Activated CD4-positive, alpha-beta T cell treated with anti-CD3 and anti-CD28 coated beads, Interleukin-2, amount 10 ng/mL, durations not matched to agents 24 days and 14 days (primary cell): ENCODE measurements at regions of chr3 and their contacts with region 1.

Region 1: DNA sequence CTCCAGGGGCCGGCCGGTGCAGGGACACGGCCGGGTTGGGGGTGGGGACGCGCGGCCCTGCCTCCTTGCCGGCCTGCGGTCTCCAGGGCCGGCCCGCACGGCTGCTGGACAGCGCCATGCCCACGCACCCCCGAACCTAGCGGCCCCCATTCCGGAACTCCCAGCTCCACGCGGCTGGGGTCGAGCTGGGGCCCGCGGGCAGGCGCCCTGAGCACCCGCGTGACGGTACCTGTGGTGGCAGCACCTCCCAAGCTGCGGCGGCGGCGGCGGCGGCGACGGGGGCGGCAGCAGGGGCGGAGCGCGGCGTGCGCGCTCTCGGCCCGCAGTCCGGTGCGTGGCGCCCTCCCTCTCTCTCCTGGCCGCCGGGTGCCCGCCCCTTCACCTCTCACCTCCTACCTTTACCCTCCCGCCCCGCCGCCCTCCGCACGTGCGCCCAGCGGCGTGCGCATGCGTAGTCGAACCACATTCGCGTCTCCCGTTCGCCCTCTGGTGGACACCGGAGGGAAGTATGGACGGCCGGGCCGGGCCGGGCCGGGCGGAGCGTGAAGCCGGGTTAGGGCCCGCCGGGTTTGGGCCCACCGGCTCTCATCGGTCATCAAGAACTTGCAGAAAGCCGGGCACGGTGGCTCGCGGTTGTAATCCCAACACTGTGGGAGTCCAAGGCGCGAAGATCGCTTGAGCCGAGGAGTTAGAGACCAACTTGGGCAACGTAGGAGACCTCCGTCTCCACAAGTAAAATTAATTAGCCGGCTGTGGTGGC is at the start of gene SCAP:
- DNase-seq: peak; percentile 99
- H3K4me3 Mint-ChIP-seq: peak within 1 kb of the TSS; percentile 88
- H3K27ac Mint-ChIP-seq: peak within 1 kb of the TSS; percentile 94
- H3K4me1 Mint-ChIP-seq: peaks cover 25% of the 10 kb centered on the region
- H3K27me3 Mint-ChIP-seq: peaks cover 2% of the 10 kb centered on the region
- total RNA-seq, gene SCAP: 86.3 and 87.2 TPM in 2 replicates

Region 2: DNA sequence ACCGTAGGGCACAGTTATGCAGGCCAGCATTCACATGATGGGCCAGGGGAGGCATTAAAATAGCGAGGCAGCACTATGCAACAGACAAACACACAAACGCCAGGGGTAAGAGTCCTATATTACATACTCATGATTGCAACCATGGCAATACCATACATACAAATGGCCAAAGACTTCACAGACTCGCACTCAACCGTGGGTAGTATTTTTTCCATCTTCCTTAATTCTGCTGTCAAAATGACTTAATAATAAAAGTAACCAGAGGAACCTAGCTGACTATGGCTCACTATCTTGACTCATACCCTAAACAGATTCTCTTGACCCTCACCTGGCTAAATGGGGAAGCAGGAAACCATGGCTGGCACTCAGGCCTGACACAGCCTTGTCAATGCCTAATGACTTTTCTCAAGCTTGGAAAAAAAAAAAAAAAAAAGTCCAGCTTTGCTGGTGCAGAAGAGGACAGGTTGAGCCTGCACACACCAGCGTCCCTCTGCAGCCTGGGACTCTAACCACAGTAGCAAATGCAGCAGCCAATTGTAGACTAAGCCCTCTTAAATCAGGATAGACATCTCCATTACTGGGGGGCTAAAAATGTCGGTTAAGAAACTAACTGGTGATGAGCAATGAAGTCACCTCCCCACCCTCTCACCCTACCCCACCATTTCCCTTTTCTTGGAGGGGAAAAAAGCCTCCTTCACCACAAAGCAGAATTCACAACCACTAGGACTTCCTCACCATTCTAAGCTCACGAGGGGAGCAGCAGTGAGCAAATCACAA is 522.3 kb before region 1 on chr3:
- intact Hi-C with region 1: loop called (anchors 10 kb)
- DNase-seq: peak; percentile 67
- H3K4me3 Mint-ChIP-seq: peak overlapping the region; percentile 66
- H3K27ac Mint-ChIP-seq: peak overlapping the region; percentile 79
- H3K4me1 Mint-ChIP-seq: peaks cover 74% of the 10 kb centered on the region
- H3K27me3 Mint-ChIP-seq: no peaks in the 10 kb centered on the region

Region 3: DNA sequence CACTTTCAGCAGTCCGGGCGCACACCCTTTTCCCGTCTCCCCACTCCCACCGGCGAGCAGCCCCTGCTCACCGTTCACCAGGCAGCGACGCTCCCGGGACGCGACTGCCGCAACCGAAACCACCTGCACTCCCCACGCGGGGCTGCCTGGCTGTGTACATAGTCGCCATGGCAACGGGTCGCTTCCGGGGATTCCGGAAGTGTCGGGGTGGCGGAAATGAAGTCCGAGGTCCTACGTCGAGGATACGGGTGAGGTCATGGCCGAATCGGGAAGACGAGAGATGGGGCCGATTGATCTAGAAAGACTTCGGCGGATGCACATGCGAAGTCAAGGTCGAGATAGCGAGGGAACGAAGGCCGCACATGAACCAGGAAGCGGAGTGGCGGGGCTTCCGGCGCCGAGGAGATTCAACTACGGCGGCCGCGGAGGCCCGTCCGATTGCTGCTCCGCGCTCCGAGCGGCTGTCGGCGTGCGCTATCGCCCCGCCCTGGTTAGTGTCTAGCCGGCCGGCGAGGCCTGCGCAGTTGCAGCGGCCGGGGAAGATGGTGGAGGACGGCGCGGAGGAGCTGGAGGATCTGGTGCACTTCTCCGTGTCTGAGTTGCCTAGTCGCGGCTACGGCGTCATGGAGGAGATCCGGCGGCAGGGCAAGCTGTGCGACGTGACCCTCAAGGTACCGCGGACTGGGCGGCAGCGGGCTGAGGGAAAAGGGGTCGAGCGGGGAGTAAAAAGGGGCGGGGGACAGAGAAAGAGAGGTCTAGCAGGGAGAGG is 193.1 kb before region 1 on chr3 and contains the starts of genes KIF9 and KLHL18:
- intact Hi-C with region 1: loop called (anchors 5 kb)
- DNase-seq: peak; percentile 98
- H3K4me3 Mint-ChIP-seq: peak within 1 kb of the TSS; percentile 100
- H3K27ac Mint-ChIP-seq: peak within 1 kb of the TSS; percentile 100
- H3K4me1 Mint-ChIP-seq: peaks cover 29% of the 10 kb centered on the region
- H3K27me3 Mint-ChIP-seq: peaks cover 3% of the 10 kb centered on the region
- total RNA-seq, gene KIF9: 3.0 and 3.6 TPM in 2 replicates
- total RNA-seq, gene KLHL18: 47.0 and 49.3 TPM in 2 replicates

Region 4: DNA sequence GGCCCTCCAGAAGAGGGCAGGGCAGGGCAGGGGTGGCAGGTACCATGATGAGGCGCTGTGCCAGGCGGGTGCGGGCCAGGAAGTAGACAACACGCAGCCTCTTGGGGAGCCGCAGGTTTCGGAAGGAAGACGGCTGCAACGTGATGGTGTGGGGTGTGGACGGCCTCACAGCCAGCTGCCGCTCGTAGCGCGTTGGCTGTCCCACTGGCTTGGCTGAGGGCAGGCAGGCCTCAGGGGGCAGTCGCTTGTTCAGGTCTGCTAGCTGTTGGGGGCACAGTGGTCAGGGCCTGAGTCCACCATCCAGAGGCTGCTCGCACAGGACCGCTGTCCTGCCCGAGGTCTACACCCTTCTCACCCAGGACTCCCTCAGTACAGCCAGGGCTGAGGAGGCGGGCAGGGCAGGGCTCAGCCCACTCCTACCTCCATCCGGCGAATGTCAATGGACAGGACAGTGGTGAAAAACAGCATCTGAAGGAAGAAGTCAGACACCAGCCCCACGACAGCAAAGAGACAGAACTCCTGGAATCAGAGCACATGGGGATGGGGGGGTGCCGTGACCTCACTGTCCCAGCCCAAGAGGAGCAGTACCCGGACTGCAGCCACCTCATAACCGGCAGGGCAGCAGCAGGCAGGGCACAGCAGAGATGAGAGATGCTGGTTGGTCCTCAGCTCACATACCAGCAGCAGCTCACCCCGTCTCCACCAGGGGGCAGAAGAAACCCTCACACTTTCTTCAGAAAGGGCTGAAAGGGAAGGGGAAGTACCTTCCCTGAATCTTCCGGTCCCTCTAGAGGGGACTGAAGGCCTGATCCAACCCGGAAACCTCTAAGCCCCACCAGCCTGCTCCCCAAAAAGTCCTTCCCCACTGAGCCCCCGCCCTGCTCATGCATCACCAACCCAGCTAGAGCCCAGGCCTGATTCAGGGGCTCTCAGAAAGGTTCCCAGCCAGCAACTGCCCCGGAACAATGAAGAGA is 55.0 kb before region 1 on chr3:
- intact Hi-C with region 1: loop called (anchors 1 kb)
- DNase-seq: peak; percentile 97
- H3K4me3 Mint-ChIP-seq: peak overlapping the region; percentile 71
- H3K27ac Mint-ChIP-seq: peak overlapping the region; percentile 99
- H3K4me1 Mint-ChIP-seq: peaks cover 13% of the 10 kb centered on the region
- H3K27me3 Mint-ChIP-seq: no peaks in the 10 kb centered on the region

Region 5: GRCh38 chr3:47513125-47513929 is 37.6 kb after region 1 on chr3 and contains the start of gene ELP6:
- intact Hi-C with region 1: loop called (anchors 1 kb)
- DNase-seq: peak; percentile 99
- H3K4me3 Mint-ChIP-seq: peak within 1 kb of the TSS; percentile 98
- H3K27ac Mint-ChIP-seq: peak within 1 kb of the TSS; percentile 98
- H3K4me1 Mint-ChIP-seq: peaks cover 17% of the 10 kb centered on the region
- H3K27me3 Mint-ChIP-seq: peaks cover 13% of the 10 kb centered on the region
- total RNA-seq, gene ELP6: 45.9 and 49.7 TPM in 2 replicates